ENCODE measurements at regions of chr17 and their contacts with region 1.

Region 1: DNA sequence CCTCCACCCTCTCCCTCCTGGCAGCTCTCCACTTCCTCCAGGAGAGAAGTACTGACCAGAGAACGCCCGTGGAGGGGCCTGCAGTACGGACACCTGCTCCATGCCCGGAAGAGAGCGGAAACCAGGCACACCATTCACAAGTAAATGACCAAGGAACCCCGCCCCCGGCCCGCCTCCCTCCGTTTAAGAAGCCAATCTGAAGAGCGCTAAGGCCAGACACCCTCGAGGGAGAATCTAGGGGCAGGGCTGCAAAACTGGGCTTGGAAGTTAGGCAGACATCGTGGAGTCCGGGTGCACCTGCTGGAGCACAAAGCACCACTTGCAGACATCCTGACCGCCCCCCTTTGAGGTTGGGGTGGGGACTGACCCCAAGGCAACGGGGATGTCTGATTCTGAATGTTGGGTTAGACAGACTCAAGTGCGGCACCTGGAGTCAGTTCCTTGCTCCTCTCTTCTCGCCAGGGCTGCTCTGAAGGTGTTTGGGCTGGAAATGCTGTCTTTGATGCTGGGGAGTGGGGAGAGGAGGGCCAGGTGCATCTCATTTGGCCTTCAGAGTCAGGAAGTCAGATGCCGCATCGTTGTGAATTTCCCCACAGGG is 964 bp upstream of the FAAP100 start:
- DNase-seq: peak; percentile 55 to 91 (median 79)
- ATAC-seq: peak; percentile 71
- H3K4me3 ChIP-seq: peak overlapping the region; percentile 92 to 96
- H3K4me3 Mint-ChIP-seq: peak overlapping the region; percentile 86
- H3K27ac ChIP-seq: peak overlapping the region; percentile 82 to 84
- H3K27ac Mint-ChIP-seq: peak overlapping the region; percentile 87
- H3K4me1 ChIP-seq: peaks cover 21% of the 10 kb centered on the region
- H3K4me1 Mint-ChIP-seq: peaks cover 31% of the 10 kb centered on the region
- H3K27me3 ChIP-seq: no peaks in the 10 kb centered on the region
- H3K27me3 Mint-ChIP-seq: no peaks in the 10 kb centered on the region
- CTCF ChIP-seq: no peak

Region 2: GRCh38 chr17:80454557-80455335 is 1098.4 kb before region 1 on chr17:
- CTCF ChIA-PET with region 1: no interaction called
- POLR2A ChIA-PET with region 1: no interaction called
- intact Hi-C with region 1: loop called in 1 of 2 experiments (anchors 2 kb)
- DNase-seq: peak; percentile 89 to 98 (median 95)
- ATAC-seq: peak; percentile 92
- H3K4me3 ChIP-seq: peak overlapping the region; percentile 82 to 92
- H3K4me3 Mint-ChIP-seq: peak overlapping the region; percentile 89
- H3K27ac ChIP-seq: peak overlapping the region; percentile 90 to 91
- H3K27ac Mint-ChIP-seq: peak overlapping the region; percentile 94
- H3K4me1 ChIP-seq: peaks cover 8% of the 10 kb centered on the region
- H3K4me1 Mint-ChIP-seq: peaks cover 16% of the 10 kb centered on the region
- H3K27me3 ChIP-seq: peaks cover 0 to 2% of the 10 kb centered on the region in 2 experiments
- H3K27me3 Mint-ChIP-seq: peaks cover 18% of the 10 kb centered on the region
- CTCF ChIP-seq: no peak

Region 3: GRCh38 chr17:81253358-81254131 is 299.6 kb before region 1 on chr17:
- CTCF ChIA-PET with region 1: interaction called, 6 read pairs
- POLR2A ChIA-PET with region 1: interaction called, 3 read pairs
- intact Hi-C with region 1: loop called (anchors 1 to 5 kb)
- DNase-seq: peak; percentile 32 to 78 (median 64)
- ATAC-seq: peak; percentile 89
- H3K4me3 ChIP-seq: no peak overlapping the region
- H3K4me3 Mint-ChIP-seq: no peak overlapping the region
- H3K27ac ChIP-seq: no peak overlapping the region
- H3K27ac Mint-ChIP-seq: peak overlapping the region; percentile 52
- H3K4me1 ChIP-seq: peaks cover 8% of the 10 kb centered on the region
- H3K4me1 Mint-ChIP-seq: peaks cover 13% of the 10 kb centered on the region
- H3K27me3 ChIP-seq: no peaks in the 10 kb centered on the region
- H3K27me3 Mint-ChIP-seq: no peaks in the 10 kb centered on the region
- CTCF ChIP-seq: peak; percentile 80

Region 4: GRCh38 chr17:81294856-81295680 is 258.0 kb before region 1 on chr17 and contains the start of gene SLC38A10:
- CTCF ChIA-PET with region 1: no interaction called
- POLR2A ChIA-PET with region 1: no interaction called
- intact Hi-C with region 1: loop called (anchors 2 kb)
- DNase-seq: peak; percentile 78 to 94 (median 91)
- ATAC-seq: peak; percentile 83
- H3K4me3 ChIP-seq: peak within 1 kb of the TSS; percentile 77 to 98
- H3K4me3 Mint-ChIP-seq: peak within 1 kb of the TSS; percentile 94
- H3K27ac ChIP-seq: peak within 1 kb of the TSS; percentile 85 to 90
- H3K27ac Mint-ChIP-seq: peak within 1 kb of the TSS; percentile 96
- H3K4me1 ChIP-seq: peaks cover 24% of the 10 kb centered on the region
- H3K4me1 Mint-ChIP-seq: peaks cover 42% of the 10 kb centered on the region
- H3K27me3 ChIP-seq: no peaks in the 10 kb centered on the region
- H3K27me3 Mint-ChIP-seq: no peaks in the 10 kb centered on the region
- CTCF ChIP-seq: no peak
- total RNA-seq, gene SLC38A10: 16.1 to 17.4 TPM

Region 5: GRCh38 chr17:81512560-81513371 is 40.4 kb before region 1 on chr17 and contains the start of gene ACTG1:
- CTCF ChIA-PET with region 1: interaction called, 15 read pairs
- POLR2A ChIA-PET with region 1: interaction called, 26 read pairs
- intact Hi-C with region 1: loop called (anchors 1 kb)
- DNase-seq: peak; percentile 87 to 97 (median 92)
- ATAC-seq: peak; percentile 60
- H3K4me3 ChIP-seq: peak within 1 kb of the TSS; percentile 84 to 93
- H3K4me3 Mint-ChIP-seq: peak within 1 kb of the TSS; percentile 98
- H3K27ac ChIP-seq: peak within 1 kb of the TSS; percentile 56 to 93
- H3K27ac Mint-ChIP-seq: peak within 1 kb of the TSS; percentile 98
- H3K4me1 ChIP-seq: peaks cover 49% of the 10 kb centered on the region
- H3K4me1 Mint-ChIP-seq: peaks cover 57% of the 10 kb centered on the region
- H3K27me3 ChIP-seq: no peaks in the 10 kb centered on the region
- H3K27me3 Mint-ChIP-seq: no peaks in the 10 kb centered on the region
- CTCF ChIP-seq: no peak
- total RNA-seq, gene ACTG1: 1,370 to 1,375 TPM

Region 6: GRCh38 chr17:81519284-81519955 is 33.7 kb before region 1 on chr17:
- CTCF ChIA-PET with region 1: interaction called, 15 read pairs
- POLR2A ChIA-PET with region 1: interaction called, 10 read pairs
- intact Hi-C with region 1: loop called (anchors 1 kb)
- DNase-seq: peak; percentile 37 to 86 (median 74)
- ATAC-seq: peak; percentile 70
- H3K4me3 ChIP-seq: peak overlapping the region; percentile 37 to 60
- H3K4me3 Mint-ChIP-seq: peak overlapping the region; percentile 32
- H3K27ac ChIP-seq: no peak overlapping the region
- H3K27ac Mint-ChIP-seq: no peak overlapping the region
- H3K4me1 ChIP-seq: peaks cover 42% of the 10 kb centered on the region
- H3K4me1 Mint-ChIP-seq: peaks cover 30% of the 10 kb centered on the region
- H3K27me3 ChIP-seq: peaks cover 0 to 13% of the 10 kb centered on the region in 2 experiments
- H3K27me3 Mint-ChIP-seq: peaks cover 2% of the 10 kb centered on the region
- CTCF ChIP-seq: peak; percentile 96

Region 7: DNA sequence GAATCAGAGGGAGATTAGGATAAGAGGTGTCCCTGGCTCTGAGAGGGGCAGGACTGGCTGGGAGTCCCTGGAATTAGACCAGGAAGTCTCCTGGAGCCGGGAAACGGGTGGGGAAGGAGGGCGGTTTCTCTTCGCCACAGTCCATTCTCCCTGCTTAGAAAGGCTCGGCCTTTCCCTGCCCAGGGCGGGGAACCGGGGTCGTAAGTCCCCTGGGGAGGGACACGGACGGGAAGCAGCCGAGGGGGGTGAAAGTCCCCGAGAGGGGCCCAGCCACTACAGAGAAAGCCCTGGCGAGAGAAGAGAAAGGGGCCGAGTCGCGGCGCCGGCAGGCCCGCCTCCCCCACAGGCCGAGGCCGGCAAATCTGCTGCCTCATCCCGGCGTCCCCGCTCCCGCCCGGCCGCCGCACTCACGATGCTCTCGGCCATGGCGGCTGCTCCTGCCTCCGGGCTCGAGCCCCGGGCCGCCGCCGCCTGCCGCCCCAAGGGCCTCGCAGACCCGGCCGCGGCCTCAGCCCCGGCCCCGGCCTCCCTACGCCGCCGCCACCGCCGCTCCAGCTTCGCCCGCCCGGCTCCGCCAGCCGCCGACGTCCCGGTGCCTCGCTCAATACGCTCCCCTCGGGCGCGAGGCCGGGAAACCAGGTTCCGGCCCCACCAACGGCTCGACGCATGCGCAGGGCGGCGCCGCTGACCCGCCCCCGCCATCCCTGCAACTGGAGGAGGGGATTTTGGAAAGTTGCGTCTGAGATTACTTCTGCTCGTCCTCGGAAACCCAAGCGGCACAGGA is 83.6 kb after region 1 on chr17 and contains the starts of genes NPLOC4 and TSPAN10:
- CTCF ChIA-PET with region 1: no interaction called
- POLR2A ChIA-PET with region 1: no interaction called
- intact Hi-C with region 1: loop called in 1 of 2 experiments (anchors 2 kb)
- DNase-seq: peak; percentile 66 to 93 (median 83)
- ATAC-seq: peak; percentile 96
- H3K4me3 ChIP-seq: peak within 1 kb of the TSS; percentile 85 to 90
- H3K4me3 Mint-ChIP-seq: peak within 1 kb of the TSS; percentile 90
- H3K27ac ChIP-seq: peak within 1 kb of the TSS; percentile 61 to 73
- H3K27ac Mint-ChIP-seq: peak within 1 kb of the TSS; percentile 91
- H3K4me1 ChIP-seq: peaks cover 19% of the 10 kb centered on the region
- H3K4me1 Mint-ChIP-seq: peaks cover 26% of the 10 kb centered on the region
- H3K27me3 ChIP-seq: no peaks in the 10 kb centered on the region
- H3K27me3 Mint-ChIP-seq: no peaks in the 10 kb centered on the region
- CTCF ChIP-seq: no peak
- total RNA-seq, gene NPLOC4: 55.9 to 69.6 TPM
- total RNA-seq, gene TSPAN10: 0.17 to 0.22 TPM

Region 8: DNA sequence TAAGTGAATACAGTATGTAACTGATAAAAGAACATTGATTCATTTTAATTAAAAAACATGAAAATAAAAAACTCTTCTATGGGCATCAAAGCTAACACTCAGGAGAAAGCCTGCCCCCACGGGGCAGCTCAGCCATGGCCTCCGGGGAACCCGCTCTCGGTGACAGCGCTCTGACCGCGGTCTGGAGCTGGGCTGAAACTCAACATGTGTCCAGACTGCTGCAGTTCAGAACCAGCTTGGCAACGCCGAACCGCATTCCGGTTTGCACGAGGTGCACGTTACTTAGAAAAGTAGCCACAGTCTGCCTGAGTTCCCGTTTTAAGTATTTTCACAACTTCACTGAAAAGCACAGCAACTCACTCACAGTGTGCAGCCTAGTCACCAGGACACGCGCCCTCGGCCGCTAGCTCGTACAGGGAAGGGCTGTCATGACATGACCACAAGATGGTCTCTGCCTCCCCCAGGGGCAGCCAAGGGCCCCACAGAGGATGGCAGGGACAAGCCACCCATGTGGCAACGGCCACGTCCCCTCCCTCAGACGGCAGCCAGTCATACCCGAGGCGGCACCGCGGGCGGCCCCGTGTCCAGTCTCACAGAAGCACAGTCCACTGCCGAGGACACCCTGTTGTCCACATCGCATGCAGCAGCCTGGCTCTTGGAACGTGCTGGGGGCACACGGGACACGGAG is 1449.1 kb after region 1 on chr17:
- CTCF ChIA-PET with region 1: no interaction called
- POLR2A ChIA-PET with region 1: no interaction called
- intact Hi-C with region 1: no loop called
- DNase-seq: no peak
- ATAC-seq: no peak
- H3K4me3 ChIP-seq: no peak overlapping the region
- H3K4me3 Mint-ChIP-seq: no peak overlapping the region
- H3K27ac ChIP-seq: no peak overlapping the region
- H3K27ac Mint-ChIP-seq: no peak overlapping the region
- H3K4me1 ChIP-seq: no peaks in the 10 kb centered on the region
- H3K4me1 Mint-ChIP-seq: no peaks in the 10 kb centered on the region
- H3K27me3 ChIP-seq: no peaks in the 10 kb centered on the region
- H3K27me3 Mint-ChIP-seq: no peaks in the 10 kb centered on the region
- CTCF ChIP-seq: no peak

Measured in CD8-positive, alpha-beta T cell (primary cell).